Activated naive CD4-positive, alpha-beta T cell treated with anti-CD3 and anti-CD28 coated beads for 36 hours (primary cell): ENCODE measurements at regions of chr5 and their contacts with region 1.

Region 1: DNA sequence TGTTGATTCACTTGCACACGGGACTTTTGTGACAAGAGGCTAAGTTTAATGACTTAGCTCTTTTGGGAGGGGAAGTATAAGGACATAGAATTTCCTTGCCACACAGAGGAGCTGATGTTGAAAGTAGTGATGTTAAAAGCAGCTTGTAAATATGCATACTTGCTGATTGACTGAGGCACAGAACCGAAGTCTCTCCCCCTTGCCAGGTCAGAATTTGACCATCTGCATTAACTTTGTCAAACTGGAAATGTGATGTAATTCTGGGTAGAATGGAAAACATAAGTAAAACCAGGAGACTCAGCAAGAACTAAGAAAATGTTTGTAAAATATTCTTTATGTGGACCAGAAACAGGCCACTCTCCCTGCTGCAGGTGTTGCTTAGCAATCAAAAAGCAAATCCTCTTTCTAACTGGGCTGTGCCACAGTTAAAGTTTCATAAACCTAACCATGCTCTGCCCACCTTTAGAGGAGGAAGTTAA is 284.2 kb downstream of the NR3C1 start:
- DNase-seq: no peak
- H3K4me3 Mint-ChIP-seq: no peak overlapping the region
- H3K27ac Mint-ChIP-seq: peak overlapping the region; percentile 20
- H3K4me1 Mint-ChIP-seq: peaks cover 15% of the 10 kb centered on the region
- H3K27me3 Mint-ChIP-seq: no peaks in the 10 kb centered on the region

Region 2: DNA sequence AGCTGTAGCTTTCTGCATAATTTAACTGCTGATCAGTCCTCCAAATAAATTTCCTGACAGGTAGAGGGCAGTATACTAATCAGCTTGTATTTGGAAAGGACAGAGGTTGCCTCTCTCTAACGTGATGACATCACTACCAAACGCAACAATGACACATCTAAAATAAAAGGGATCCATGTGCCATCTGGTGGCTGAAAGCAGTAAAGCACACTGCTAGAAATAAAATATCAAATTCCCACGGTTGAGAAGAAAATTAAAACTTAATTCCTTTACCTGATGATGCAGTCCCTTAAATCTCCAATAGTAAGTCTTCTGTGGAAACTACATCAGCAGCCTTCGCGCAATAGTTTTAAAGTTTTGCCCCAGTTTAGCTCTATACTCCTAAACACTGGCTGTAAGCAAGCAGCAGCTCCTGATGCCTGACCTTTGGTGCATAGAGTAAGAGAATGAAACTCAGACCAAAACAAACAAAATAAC is 1555.1 kb before region 1 on chr5:
- CTCF ChIA-PET with region 1: no interaction called
- intact Hi-C with region 1: no loop called
- DNase-seq: peak; percentile 80
- H3K4me3 Mint-ChIP-seq: no peak overlapping the region
- H3K27ac Mint-ChIP-seq: peak overlapping the region; percentile 77
- H3K4me1 Mint-ChIP-seq: peaks cover 22% of the 10 kb centered on the region
- H3K27me3 Mint-ChIP-seq: no peaks in the 10 kb centered on the region

Region 3: GRCh38 chr5:143016777-143017516 is 102.4 kb before region 1 on chr5:
- CTCF ChIA-PET with region 1: no interaction called
- intact Hi-C with region 1: no loop called
- DNase-seq: peak; percentile 77
- H3K4me3 Mint-ChIP-seq: no peak overlapping the region
- H3K27ac Mint-ChIP-seq: no peak overlapping the region
- H3K4me1 Mint-ChIP-seq: peaks cover 15% of the 10 kb centered on the region
- H3K27me3 Mint-ChIP-seq: no peaks in the 10 kb centered on the region

Region 4: GRCh38 chr5:143101121-143101520 is 18.2 kb before region 1 on chr5:
- CTCF ChIA-PET with region 1: no interaction called
- intact Hi-C with region 1: loop called (anchors 2 kb)
- DNase-seq: peak; percentile 22
- H3K4me3 Mint-ChIP-seq: peak overlapping the region; percentile 31
- H3K27ac Mint-ChIP-seq: peak overlapping the region; percentile 81
- H3K4me1 Mint-ChIP-seq: peaks cover 25% of the 10 kb centered on the region
- H3K27me3 Mint-ChIP-seq: no peaks in the 10 kb centered on the region

Region 5: DNA sequence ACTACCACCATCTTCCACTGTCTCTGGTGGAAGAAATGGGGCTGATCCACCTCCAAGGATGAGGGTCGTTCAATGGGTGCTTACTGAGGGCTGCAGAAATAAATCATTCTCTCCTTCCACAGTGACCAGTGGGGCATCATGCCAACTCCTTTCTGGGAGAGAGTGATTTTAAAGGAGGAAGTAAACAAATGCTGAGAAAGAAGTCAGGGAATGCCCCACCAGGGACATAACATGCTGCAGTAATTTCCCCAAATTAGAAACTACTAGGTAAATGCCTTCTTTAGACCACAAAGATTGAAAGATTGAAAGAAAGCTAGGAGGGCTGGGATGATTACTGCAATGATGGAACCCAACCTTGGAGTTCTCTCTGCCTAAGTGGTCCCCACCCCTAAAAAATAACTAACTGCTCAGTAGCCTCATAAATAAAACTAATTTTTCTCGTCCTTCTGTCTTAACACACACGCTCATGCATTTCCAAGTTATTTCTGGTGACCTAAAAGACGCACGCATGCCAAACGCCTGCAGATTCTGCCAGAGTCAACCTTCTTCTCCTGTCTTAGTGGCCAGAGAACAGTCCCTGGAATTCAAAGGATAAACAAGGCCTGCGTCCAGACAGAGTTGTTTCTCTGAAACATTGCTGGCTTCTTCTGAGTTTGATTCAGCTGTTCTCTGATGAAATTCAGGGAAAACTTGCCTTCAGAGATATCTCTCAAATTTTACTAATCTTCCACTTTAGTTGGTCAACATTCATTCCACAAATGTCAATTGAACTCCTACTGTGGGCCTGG is 34.2 kb after region 1 on chr5:
- CTCF ChIA-PET with region 1: no interaction called
- intact Hi-C with region 1: no loop called
- DNase-seq: no peak
- H3K4me3 Mint-ChIP-seq: no peak overlapping the region
- H3K27ac Mint-ChIP-seq: no peak overlapping the region
- H3K4me1 Mint-ChIP-seq: peaks cover 3% of the 10 kb centered on the region
- H3K27me3 Mint-ChIP-seq: no peaks in the 10 kb centered on the region

Region 6: DNA sequence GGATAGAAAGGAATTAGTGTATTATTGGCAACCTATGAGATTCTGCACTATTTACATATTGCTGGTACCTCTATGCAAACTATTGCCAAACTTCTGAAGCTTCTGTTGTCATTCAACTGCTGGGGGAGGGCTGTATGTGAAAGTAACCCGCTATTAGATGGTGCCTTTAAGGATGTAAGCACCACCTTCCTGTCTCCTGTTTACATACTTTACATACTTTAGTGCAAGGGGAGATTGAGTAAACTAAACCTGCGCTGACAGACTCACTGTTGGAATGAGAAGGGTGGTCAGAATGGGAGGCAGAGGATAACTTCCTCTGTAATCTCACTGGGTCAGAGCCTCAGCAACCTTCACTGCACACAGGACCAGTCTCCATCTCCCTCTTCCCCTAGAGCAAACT is 160.4 kb after region 1 on chr5:
- CTCF ChIA-PET with region 1: no interaction called
- intact Hi-C with region 1: no loop called
- DNase-seq: no peak
- H3K4me3 Mint-ChIP-seq: no peak overlapping the region
- H3K27ac Mint-ChIP-seq: no peak overlapping the region
- H3K4me1 Mint-ChIP-seq: no peaks in the 10 kb centered on the region
- H3K27me3 Mint-ChIP-seq: no peaks in the 10 kb centered on the region